GM12878 (cell line): ENCODE measurements at regions of chr15 and their contacts with region 1.

Region 1: GRCh38 chr15:74545880-74546656 is 5.0 kb downstream of the ARID3B start:
- DNase-seq: peak; percentile 77
- ATAC-seq: peak; percentile 58
- H3K4me3 ChIP-seq: peak overlapping the region; percentile 48
- H3K27ac ChIP-seq: peak overlapping the region; percentile 72
- H3K4me1 ChIP-seq: peaks cover 16% of the 10 kb centered on the region
- H3K27me3 ChIP-seq: no peaks in the 10 kb centered on the region
- CTCF ChIP-seq: no peak
- EP300 ChIP-seq: peak in 1 of 2 experiments; percentile 79; a peak in 2 of 4 replicates
- POLR2A ChIP-seq: no peak; the same call in 1 of the 2 replicates
- RAD21 ChIP-seq: no peak

Region 2: DNA sequence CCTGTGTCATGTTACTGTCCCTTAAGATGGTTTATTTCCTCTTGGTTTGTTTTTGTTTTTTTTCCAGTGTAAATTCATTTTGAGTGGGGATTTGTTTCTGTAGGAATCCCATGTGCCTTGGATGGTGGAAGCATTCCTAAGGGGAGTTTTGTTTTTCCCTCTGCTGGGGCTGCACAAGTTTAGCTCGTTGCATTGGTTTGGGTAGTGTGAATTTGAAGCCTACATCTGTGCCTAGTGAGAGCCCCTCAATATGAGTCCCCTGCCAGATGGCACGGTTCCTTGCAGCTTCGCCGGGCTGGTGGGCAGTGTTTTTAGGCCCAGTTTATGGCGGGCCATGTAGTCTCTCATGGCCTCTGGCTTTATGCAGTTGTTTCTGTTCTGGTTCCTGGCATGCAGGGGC is 12.6 kb after region 1 on chr15:
- CTCF ChIA-PET with region 1: interaction called, 5 read pairs
- POLR2A ChIA-PET with region 1: interaction called, 6 read pairs
- RAD21 ChIA-PET with region 1: interaction called, 8 read pairs
- SMC1A ChIA-PET with region 1: interaction called, 10 read pairs
- in situ Hi-C with region 1: no loop called
- intact Hi-C with region 1: no loop called
- DNase-seq: no peak
- ATAC-seq: no peak; the same call in 2 of the 3 replicates
- H3K4me3 ChIP-seq: no peak overlapping the region
- H3K27ac ChIP-seq: no peak overlapping the region
- H3K4me1 ChIP-seq: no peaks in the 10 kb centered on the region
- H3K27me3 ChIP-seq: no peaks in the 10 kb centered on the region
- CTCF ChIP-seq: no peak
- EP300 ChIP-seq: no peak
- POLR2A ChIP-seq: no peak
- RAD21 ChIP-seq: no peak

Region 3: DNA sequence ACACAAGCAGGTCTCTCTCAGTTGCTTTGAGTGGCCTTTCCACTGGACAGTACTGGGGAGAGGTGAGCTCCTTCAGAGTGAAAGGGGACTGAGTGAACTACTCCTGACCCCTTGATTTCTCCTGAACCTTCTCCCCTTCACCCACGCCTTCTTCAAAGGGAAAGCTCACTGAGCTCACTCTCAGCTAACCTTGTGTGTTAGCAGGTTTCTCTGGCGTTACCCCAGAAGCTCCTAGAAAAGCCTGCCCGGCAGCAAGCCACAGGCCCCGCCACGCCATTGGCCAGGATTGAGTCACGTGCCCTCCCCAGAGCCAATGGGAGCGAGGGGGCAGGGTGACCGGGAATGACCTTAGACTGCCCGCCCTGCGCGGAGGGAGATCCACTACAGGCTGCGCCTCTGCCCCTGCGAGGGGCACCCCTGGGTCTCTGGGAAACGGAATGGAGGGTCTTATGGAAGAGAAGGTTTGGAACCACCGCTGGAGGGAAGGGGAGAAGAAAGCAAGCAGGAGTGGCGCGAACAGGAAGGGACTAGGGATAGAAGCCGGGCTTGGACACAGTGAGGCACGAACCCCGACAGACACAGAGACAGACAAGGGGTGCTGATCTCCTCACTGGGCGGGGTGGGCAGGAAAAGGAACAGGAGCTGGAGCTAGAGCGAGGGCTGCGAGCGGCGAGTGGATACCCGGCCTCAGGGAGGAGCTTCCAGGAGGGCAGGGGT is 52.2 kb after region 1 on chr15:
- CTCF ChIA-PET with region 1: interaction called, 6 read pairs
- POLR2A ChIA-PET with region 1: interaction called, 6 read pairs
- RAD21 ChIA-PET with region 1: interaction called, 6 read pairs
- SMC1A ChIA-PET with region 1: interaction called, 10 read pairs
- in situ Hi-C with region 1: no loop called
- intact Hi-C with region 1: no loop called
- DNase-seq: peak; percentile 69
- ATAC-seq: peak; percentile 99
- H3K4me3 ChIP-seq: peak overlapping the region; percentile 74
- H3K27ac ChIP-seq: peak overlapping the region; percentile 73
- H3K4me1 ChIP-seq: peaks cover 12% of the 10 kb centered on the region; the same call in 1 of the 2 replicates
- H3K27me3 ChIP-seq: no peaks in the 10 kb centered on the region
- CTCF ChIP-seq: no peak
- EP300 ChIP-seq: no peak
- POLR2A ChIP-seq: peak; percentile 95
- RAD21 ChIP-seq: no peak

Region 4: DNA sequence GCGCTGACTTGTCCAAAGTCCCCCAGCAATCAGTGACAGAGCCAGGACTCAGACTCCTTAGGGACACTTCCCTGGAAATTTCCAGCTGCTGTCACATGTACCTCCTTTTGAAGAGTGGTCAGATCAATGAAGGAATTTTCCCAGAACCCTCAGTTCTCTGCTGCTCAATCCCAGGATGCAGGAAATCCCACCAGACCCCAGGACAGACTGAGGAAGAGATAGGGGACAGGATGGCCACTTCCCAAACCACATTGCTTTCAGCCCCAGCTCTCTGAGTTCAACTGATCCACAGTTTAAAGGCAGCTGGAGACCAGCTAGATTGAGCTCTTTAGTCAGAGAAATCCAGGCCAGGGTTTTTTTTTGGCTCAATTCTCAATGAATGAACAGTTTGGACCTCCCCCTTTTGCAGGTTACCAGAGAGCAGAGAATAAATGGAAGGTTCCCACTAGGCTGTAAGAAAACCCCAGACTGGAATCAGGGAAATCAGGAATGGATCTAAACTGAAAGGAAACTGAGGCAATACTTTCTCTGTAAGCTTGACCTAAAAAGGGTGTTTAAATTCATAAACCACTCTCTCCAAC is 177.8 kb after region 1 on chr15:
- CTCF ChIA-PET with region 1: no interaction called
- POLR2A ChIA-PET with region 1: no interaction called
- RAD21 ChIA-PET with region 1: no interaction called
- SMC1A ChIA-PET with region 1: no interaction called
- in situ Hi-C with region 1: no loop called
- intact Hi-C with region 1: no loop called
- DNase-seq: no peak
- ATAC-seq: peak; percentile 48; the same call in 2 of the 3 replicates
- H3K4me3 ChIP-seq: no peak overlapping the region
- H3K27ac ChIP-seq: no peak overlapping the region
- H3K4me1 ChIP-seq: peaks cover 4% of the 10 kb centered on the region
- H3K27me3 ChIP-seq: peaks cover 0 to 3% of the 10 kb centered on the region in 2 experiments; a peak in 3 of 4 replicates
- CTCF ChIP-seq: no peak
- EP300 ChIP-seq: no peak
- POLR2A ChIP-seq: no peak
- RAD21 ChIP-seq: no peak